ENCODE measurements at regions of chr11 and their contacts with region 1.

Region 1: GRCh38 chr11:96342961-96343711 is at the start of gene MAML2:
- DNase-seq: peak; percentile 93
- ATAC-seq: peak; percentile 86
- H3K4me3 ChIP-seq: peak within 1 kb of the TSS; percentile 82 to 100 (median 92)
- H3K4me3 Mint-ChIP-seq: peak within 1 kb of the TSS; percentile 99
- H3K27ac ChIP-seq: peak within 1 kb of the TSS; percentile 45 to 77
- H3K27ac Mint-ChIP-seq: peak within 1 kb of the TSS; percentile 95
- H3K4me1 ChIP-seq: peaks cover 38 to 43% of the 10 kb centered on the region in 2 donors
- H3K4me1 Mint-ChIP-seq: peaks cover 51% of the 10 kb centered on the region
- H3K27me3 ChIP-seq: no peaks in the 10 kb centered on the region
- H3K27me3 Mint-ChIP-seq: no peaks in the 10 kb centered on the region
- CTCF ChIP-seq: peak; percentile 94
- total RNA-seq, gene MAML2: 26.0 and 26.4 TPM in 2 replicates

Region 2: DNA sequence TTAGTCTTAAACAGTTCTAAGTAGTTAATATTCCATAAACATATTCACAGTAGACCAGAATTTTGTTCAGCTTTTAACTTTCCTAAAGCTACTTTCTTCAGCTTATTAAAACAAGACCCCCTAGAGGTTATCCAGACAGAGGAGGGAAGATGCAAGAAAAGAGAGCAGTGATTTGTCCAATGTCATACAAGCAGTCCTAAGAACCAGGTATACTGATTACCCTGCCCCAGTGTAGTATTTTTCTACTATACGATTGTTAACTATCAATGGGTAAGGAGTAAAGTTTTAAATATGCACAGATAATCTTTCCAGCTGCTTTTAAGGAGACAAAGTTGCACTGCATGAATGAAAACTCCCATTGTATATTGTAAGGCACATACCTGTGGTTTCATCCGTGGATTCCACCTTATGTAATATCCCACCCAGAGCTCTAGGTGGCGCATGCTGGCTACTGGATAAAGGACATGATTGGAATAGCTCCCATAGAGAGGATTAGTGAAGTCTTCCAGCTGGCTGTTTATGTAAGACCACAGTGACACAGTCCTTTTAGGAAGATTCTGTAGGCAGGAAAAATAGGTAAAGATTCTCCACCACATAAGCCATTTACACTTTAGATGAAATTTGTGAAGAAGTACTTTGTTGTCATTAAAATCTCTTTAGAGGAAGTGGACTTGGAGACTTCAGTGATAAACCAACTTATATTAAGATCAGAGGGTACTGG is 507.2 kb before region 1 on chr11:
- CTCF ChIA-PET with region 1: interaction called, 41 read pairs
- POLR2A ChIA-PET with region 1: interaction called, 4 read pairs
- intact Hi-C with region 1: loop called (anchors 2 kb)
- DNase-seq: peak; percentile 67
- ATAC-seq: peak; percentile 90
- H3K4me3 ChIP-seq: no peak overlapping the region
- H3K4me3 Mint-ChIP-seq: no peak overlapping the region
- H3K27ac ChIP-seq: no peak overlapping the region
- H3K27ac Mint-ChIP-seq: no peak overlapping the region
- H3K4me1 ChIP-seq: no peaks in the 10 kb centered on the region
- H3K4me1 Mint-ChIP-seq: no peaks in the 10 kb centered on the region
- H3K27me3 ChIP-seq: no peaks in the 10 kb centered on the region
- H3K27me3 Mint-ChIP-seq: no peaks in the 10 kb centered on the region
- CTCF ChIP-seq: peak; percentile 92

Region 3: DNA sequence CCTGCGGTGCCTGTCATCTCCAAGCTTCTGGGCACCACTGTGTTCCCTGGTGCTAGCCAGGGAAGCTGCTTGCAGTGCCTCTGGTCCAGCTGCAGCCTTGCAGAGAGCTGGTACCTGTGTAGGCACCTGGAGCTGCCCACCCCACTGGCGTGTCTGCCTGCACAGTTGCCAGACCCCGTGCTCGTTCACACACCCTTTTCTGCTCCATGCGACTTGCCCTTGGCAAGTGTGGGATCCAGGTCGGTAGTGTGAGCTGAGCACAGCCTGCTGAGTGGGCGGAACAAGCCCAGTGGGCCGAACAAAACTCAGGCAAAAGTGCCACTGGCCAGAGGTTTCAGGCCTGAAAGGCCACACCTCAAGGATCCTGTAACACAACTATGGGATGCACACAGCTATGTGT is 272.7 kb before region 1 on chr11:
- CTCF ChIA-PET with region 1: interaction called, 290 read pairs
- POLR2A ChIA-PET with region 1: no interaction called
- intact Hi-C with region 1: no loop called
- DNase-seq: no peak
- ATAC-seq: no peak
- H3K4me3 ChIP-seq: no peak overlapping the region
- H3K4me3 Mint-ChIP-seq: no peak overlapping the region
- H3K27ac ChIP-seq: no peak overlapping the region
- H3K27ac Mint-ChIP-seq: no peak overlapping the region
- H3K4me1 ChIP-seq: peaks cover 16% of the 10 kb centered on the region in 2 donors
- H3K4me1 Mint-ChIP-seq: peaks cover 31% of the 10 kb centered on the region
- H3K27me3 ChIP-seq: no peaks in the 10 kb centered on the region
- H3K27me3 Mint-ChIP-seq: no peaks in the 10 kb centered on the region
- CTCF ChIP-seq: no peak

Region 4: GRCh38 chr11:96188243-96189006 is 154.7 kb before region 1 on chr11:
- CTCF ChIA-PET with region 1: interaction called, 18 read pairs
- POLR2A ChIA-PET with region 1: interaction called, 4 read pairs
- intact Hi-C with region 1: loop called (anchors 5 kb)
- DNase-seq: peak; percentile 20
- ATAC-seq: peak; percentile 45
- H3K4me3 ChIP-seq: no peak overlapping the region
- H3K4me3 Mint-ChIP-seq: peak overlapping the region; percentile 57
- H3K27ac ChIP-seq: peak overlapping the region in 1 of 2 donors; percentile 68
- H3K27ac Mint-ChIP-seq: peak overlapping the region; percentile 54
- H3K4me1 ChIP-seq: peaks cover 42 to 56% of the 10 kb centered on the region in 2 donors
- H3K4me1 Mint-ChIP-seq: peaks cover 72% of the 10 kb centered on the region
- H3K27me3 ChIP-seq: no peaks in the 10 kb centered on the region
- H3K27me3 Mint-ChIP-seq: no peaks in the 10 kb centered on the region
- CTCF ChIP-seq: no peak

Region 5: GRCh38 chr11:96254087-96254486 is 89.0 kb before region 1 on chr11:
- CTCF ChIA-PET with region 1: interaction called, 54 read pairs
- POLR2A ChIA-PET with region 1: interaction called, 7 read pairs
- intact Hi-C with region 1: loop called (anchors 1 kb)
- DNase-seq: peak; percentile 33
- ATAC-seq: no peak
- H3K4me3 ChIP-seq: peak overlapping the region; percentile 7 to 53 (median 34)
- H3K4me3 Mint-ChIP-seq: peak overlapping the region; percentile 89
- H3K27ac ChIP-seq: peak overlapping the region; percentile 95 to 99
- H3K27ac Mint-ChIP-seq: peak overlapping the region; percentile 94
- H3K4me1 ChIP-seq: peaks cover 67 to 69% of the 10 kb centered on the region in 2 donors
- H3K4me1 Mint-ChIP-seq: peaks cover 82% of the 10 kb centered on the region
- H3K27me3 ChIP-seq: no peaks in the 10 kb centered on the region
- H3K27me3 Mint-ChIP-seq: no peaks in the 10 kb centered on the region
- CTCF ChIP-seq: no peak

Region 6: DNA sequence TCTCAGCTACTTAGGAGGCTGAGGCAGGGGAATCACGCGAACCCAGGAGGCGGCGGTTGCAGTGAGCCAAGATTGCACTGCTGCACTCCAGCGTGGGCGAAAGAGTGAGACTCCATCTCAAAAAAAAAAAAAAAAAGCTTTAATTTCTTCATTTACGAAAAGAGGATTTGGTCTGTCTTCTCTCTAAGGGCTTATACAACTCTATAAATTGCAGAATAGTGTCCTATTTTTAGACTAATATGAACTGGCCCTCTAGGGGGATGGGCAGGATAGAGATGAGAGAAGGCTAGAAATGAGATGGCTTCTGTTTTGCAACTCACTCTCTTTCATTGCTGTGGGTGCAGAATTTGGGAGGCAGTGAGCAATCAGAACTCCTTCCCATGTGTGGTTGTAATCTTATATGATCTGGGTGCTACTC is 11.4 kb before region 1 on chr11:
- CTCF ChIA-PET with region 1: interaction called, 17 read pairs
- POLR2A ChIA-PET with region 1: no interaction called
- intact Hi-C with region 1: no loop called
- DNase-seq: no peak
- ATAC-seq: no peak
- H3K4me3 ChIP-seq: no peak overlapping the region
- H3K4me3 Mint-ChIP-seq: no peak overlapping the region
- H3K27ac ChIP-seq: no peak overlapping the region
- H3K27ac Mint-ChIP-seq: no peak overlapping the region
- H3K4me1 ChIP-seq: peaks cover 19 to 29% of the 10 kb centered on the region in 2 donors
- H3K4me1 Mint-ChIP-seq: peaks cover 49% of the 10 kb centered on the region
- H3K27me3 ChIP-seq: no peaks in the 10 kb centered on the region
- H3K27me3 Mint-ChIP-seq: no peaks in the 10 kb centered on the region
- CTCF ChIP-seq: no peak

Region 7: DNA sequence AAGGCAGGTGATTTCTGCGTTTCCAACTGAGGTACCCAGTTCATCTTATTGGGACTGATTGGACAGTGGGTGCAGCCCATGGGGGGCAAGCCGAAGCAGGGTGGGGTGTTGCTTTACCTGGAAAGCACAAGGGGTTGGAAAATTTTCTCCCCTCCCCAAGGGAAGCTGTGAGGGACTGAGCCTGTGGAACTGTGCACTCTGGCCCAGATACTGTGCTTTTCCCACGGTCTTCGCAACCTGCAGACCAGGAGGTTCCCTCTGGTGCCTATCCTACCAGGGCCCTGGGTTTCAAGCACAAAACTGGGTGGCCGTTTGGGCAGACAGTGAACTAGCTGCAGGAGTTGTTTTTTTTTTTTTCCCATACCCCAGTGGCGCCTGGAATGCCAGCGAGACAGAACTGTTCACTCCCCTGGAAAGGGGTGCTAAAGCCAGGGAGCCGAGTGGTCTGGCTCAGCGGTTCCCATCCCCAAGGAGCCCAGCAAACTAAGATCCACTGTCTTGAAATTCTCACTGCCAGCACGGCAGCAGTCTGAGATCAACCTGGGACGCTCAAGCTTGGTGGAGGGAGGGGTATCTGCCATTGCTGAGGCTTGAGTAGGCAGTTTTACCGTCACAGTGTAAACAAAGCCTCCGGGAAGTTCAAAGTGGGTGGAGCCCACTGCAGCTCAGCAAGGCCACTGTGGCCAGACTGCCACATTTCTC is 143.9 kb after region 1 on chr11:
- CTCF ChIA-PET with region 1: no interaction called
- POLR2A ChIA-PET with region 1: no interaction called
- intact Hi-C with region 1: no loop called
- DNase-seq: no peak
- ATAC-seq: no peak
- H3K4me3 ChIP-seq: no peak overlapping the region
- H3K4me3 Mint-ChIP-seq: no peak overlapping the region
- H3K27ac ChIP-seq: no peak overlapping the region
- H3K27ac Mint-ChIP-seq: no peak overlapping the region
- H3K4me1 ChIP-seq: no peaks in the 10 kb centered on the region
- H3K4me1 Mint-ChIP-seq: no peaks in the 10 kb centered on the region
- H3K27me3 ChIP-seq: peaks cover 0 to 5% (median 2%) of the 10 kb centered on the region in 4 experiments
- H3K27me3 Mint-ChIP-seq: peaks cover 22% of the 10 kb centered on the region
- CTCF ChIP-seq: no peak

Region 8: DNA sequence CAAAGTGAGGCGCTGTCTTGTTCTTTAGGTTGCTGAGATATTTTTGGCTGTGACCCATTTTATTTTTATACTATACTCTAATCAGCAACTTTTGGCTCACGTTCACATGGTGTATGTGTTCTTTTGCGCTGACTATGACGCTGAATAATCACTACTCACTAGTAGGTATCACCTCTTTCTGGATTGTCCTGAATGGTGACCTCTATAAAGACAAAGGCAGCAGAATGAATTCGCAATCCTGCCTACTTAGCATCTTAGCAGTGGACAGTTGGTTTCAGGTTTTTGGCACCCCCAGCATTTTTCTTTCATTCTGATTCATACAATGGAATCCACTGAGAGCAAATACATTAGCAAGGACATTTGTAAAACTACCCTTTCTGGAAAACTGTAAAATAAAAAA is 397.9 kb after region 1 on chr11:
- CTCF ChIA-PET with region 1: no interaction called
- POLR2A ChIA-PET with region 1: no interaction called
- intact Hi-C with region 1: no loop called
- DNase-seq: no peak
- ATAC-seq: no peak
- H3K4me3 ChIP-seq: no peak overlapping the region
- H3K4me3 Mint-ChIP-seq: no peak overlapping the region
- H3K27ac ChIP-seq: no peak overlapping the region
- H3K27ac Mint-ChIP-seq: no peak overlapping the region
- H3K4me1 ChIP-seq: no peaks in the 10 kb centered on the region
- H3K4me1 Mint-ChIP-seq: no peaks in the 10 kb centered on the region
- H3K27me3 ChIP-seq: no peaks in the 10 kb centered on the region
- H3K27me3 Mint-ChIP-seq: no peaks in the 10 kb centered on the region
- CTCF ChIP-seq: no peak

Measured in B cell (primary cell).